ENCODE measurements at regions of chr4 and their contacts with region 1.

Region 1: DNA sequence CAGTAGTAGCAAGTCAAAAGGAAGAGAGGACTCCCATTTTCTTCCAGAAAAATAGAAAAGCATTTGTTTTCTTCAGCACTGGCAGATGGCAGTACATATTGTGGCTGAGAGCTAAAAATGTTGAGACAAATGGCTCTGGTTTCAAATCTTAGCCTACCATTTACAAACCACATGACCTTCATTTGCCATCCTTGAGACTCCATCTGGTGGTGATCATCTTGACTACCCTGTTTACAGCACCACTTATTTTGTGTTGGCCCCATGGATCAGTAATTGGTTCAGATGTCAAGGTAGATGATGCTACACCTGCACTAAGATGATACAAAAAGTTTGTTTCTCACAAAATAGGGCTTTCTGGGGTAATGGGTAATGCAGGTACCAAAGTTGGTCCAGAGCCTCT is 951.8 kb upstream of the IGFBP7 start:
- DNase-seq: no peak
- H3K4me3 ChIP-seq: no peak overlapping the region
- H3K4me3 Mint-ChIP-seq: no peak overlapping the region
- H3K27ac Mint-ChIP-seq: peak overlapping the region; percentile 25
- H3K4me1 ChIP-seq: no peaks in the 10 kb centered on the region
- H3K4me1 Mint-ChIP-seq: no peaks in the 10 kb centered on the region
- H3K27me3 ChIP-seq: no peaks in the 10 kb centered on the region
- H3K27me3 Mint-ChIP-seq: no peaks in the 10 kb centered on the region
- CTCF ChIP-seq: no peak

Region 2: GRCh38 chr4:57426779-57427395 is 635.1 kb before region 1 on chr4:
- CTCF ChIA-PET with region 1: no interaction called
- POLR2A ChIA-PET with region 1: no interaction called
- intact Hi-C with region 1: loop called (anchors 1 kb)
- DNase-seq: peak; percentile 69 to 75
- H3K4me3 ChIP-seq: no peak overlapping the region
- H3K4me3 Mint-ChIP-seq: no peak overlapping the region
- H3K27ac Mint-ChIP-seq: no peak overlapping the region
- H3K4me1 ChIP-seq: no peaks in the 10 kb centered on the region
- H3K4me1 Mint-ChIP-seq: peaks cover 6% of the 10 kb centered on the region
- H3K27me3 ChIP-seq: no peaks in the 10 kb centered on the region; the same call in 1 of the 2 replicates
- H3K27me3 Mint-ChIP-seq: peaks cover 20% of the 10 kb centered on the region
- CTCF ChIP-seq: peak; percentile 64 to 83

Region 3: GRCh38 chr4:58518683-58519082 is 456.7 kb after region 1 on chr4:
- CTCF ChIA-PET with region 1: no interaction called
- POLR2A ChIA-PET with region 1: no interaction called
- intact Hi-C with region 1: no loop called
- DNase-seq: no peak
- H3K4me3 ChIP-seq: no peak overlapping the region
- H3K4me3 Mint-ChIP-seq: no peak overlapping the region
- H3K27ac Mint-ChIP-seq: no peak overlapping the region
- H3K4me1 ChIP-seq: no peaks in the 10 kb centered on the region
- H3K4me1 Mint-ChIP-seq: no peaks in the 10 kb centered on the region
- H3K27me3 ChIP-seq: no peaks in the 10 kb centered on the region
- H3K27me3 Mint-ChIP-seq: no peaks in the 10 kb centered on the region
- CTCF ChIP-seq: no peak